ENCODE measurements at regions of chr1 and their contacts with region 1.

Region 1: DNA sequence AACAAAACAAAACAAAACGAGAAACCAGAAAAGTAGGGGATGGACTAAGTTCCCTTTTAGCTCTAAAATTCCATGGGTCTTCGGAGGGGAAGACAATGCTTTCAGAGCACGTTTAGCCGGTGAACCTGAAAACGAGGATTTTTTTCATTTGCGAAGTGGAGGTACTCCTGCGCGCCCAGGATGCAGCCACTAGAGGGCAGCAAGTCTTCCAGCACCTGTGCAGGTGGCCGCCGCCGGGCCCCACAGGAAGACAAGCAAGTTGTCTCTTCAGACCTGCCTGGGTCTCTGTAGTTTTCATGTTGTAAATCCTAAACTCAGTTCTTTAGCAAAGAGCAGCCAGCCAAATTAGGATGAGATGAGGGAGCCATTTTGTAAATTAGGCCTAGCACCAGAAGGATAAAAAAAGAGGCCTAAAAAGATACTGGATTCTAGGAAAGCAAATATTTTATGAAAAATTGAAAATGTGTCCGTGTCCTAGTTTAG is 17.7 kb upstream of the SNX27 start:
- DNase-seq: peak; percentile 93
- H3K4me3 Mint-ChIP-seq: no peak overlapping the region
- H3K27ac Mint-ChIP-seq: peak overlapping the region; percentile 27
- H3K4me1 Mint-ChIP-seq: peaks cover 40% of the 10 kb centered on the region
- H3K27me3 Mint-ChIP-seq: no peaks in the 10 kb centered on the region
- CTCF ChIP-seq: peak; percentile 94

Region 2: DNA sequence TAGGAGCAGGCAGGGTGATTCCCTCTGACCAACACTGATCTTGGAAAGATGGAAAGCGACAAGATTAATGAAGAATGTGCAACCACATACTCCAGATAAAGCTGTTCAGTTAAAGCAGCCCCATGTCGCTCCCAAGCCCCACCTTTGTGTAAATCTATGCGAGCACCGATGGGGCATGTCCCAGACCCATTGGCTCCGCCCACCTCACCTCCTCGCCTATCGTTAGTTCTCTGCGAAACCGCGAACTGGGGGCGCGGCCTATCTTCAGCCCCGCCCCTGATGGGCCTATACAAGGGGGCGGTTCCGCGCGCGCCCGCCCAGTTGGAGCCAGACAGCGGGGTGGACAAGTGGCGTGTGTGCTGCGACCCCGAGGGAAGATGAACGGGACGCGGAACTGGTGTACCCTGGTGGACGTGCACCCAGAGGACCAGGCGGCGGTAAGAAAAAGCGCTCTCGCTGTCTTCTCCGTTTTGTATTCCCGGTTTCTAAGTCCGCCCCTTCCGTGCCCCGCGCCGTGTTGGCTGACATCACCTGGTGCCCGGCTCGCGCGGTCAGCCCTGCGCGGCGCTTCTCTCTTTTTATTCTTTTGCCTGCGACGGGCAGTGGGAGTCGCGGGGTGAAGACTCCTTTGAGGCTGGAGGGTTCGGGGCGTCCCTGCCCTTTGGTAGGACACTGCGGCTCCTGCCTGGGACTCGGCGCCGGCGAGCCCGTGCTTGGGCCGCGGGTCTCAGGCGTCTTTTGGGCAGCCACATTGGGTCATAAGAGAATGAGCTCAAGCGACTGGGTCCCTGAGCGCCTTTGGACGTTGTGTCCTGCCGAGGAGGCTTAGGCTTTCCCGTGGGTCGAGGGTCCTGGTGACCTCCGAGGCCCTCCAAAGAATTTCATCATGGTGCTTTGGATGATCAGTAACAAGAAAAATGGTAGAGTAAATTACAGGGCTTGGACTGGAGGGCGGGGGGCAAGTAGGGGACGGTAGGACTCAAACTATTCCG is 53.9 kb before region 1 on chr1 and contains the start of gene TUFT1:
- CTCF ChIA-PET with region 1: no interaction called
- intact Hi-C with region 1: loop called (anchors 10 kb)
- DNase-seq: peak; percentile 98
- H3K4me3 Mint-ChIP-seq: peak within 1 kb of the TSS; percentile 86
- H3K27ac Mint-ChIP-seq: peak within 1 kb of the TSS; percentile 92
- H3K4me1 Mint-ChIP-seq: peaks cover 28% of the 10 kb centered on the region
- H3K27me3 Mint-ChIP-seq: no peaks in the 10 kb centered on the region
- CTCF ChIP-seq: no peak
- total RNA-seq, gene TUFT1: 31.4 and 34.3 TPM in 2 replicates

Region 3: GRCh38 chr1:151611832-151612500 is 17.8 kb after region 1 on chr1 and contains the start of gene SNX27:
- CTCF ChIA-PET with region 1: interaction called, 5 read pairs
- intact Hi-C with region 1: loop called (anchors 2 kb)
- DNase-seq: peak; percentile 89
- H3K4me3 Mint-ChIP-seq: peak within 1 kb of the TSS; percentile 83
- H3K27ac Mint-ChIP-seq: peak within 1 kb of the TSS; percentile 76
- H3K4me1 Mint-ChIP-seq: peaks cover 50% of the 10 kb centered on the region
- H3K27me3 Mint-ChIP-seq: no peaks in the 10 kb centered on the region
- CTCF ChIP-seq: no peak
- total RNA-seq, gene SNX27: 52.4 and 57.1 TPM in 2 replicates

Region 4: DNA sequence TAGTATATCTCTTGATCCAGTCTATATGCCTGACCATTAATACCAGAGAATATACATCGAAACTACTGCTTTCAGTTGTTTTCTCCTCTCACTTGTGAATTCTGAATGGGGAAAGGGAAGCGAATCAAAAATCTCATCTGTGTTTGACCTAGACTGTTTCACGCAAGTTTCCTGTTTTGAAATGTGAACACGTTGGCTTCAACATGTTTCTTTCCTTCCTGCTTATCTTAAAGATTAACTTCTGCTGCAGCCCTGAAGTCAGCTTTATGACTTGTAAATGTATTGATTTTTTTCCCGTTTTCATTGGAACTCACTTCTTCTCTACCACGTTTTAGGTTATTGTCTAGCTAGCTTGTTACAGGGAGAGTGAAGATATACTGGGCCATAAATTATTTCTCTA is 67.6 kb after region 1 on chr1:
- CTCF ChIA-PET with region 1: no interaction called
- intact Hi-C with region 1: loop called (anchors 5 kb)
- DNase-seq: no peak
- H3K4me3 Mint-ChIP-seq: no peak overlapping the region
- H3K27ac Mint-ChIP-seq: peak overlapping the region; percentile 11
- H3K4me1 Mint-ChIP-seq: peaks cover 20% of the 10 kb centered on the region
- H3K27me3 Mint-ChIP-seq: no peaks in the 10 kb centered on the region
- CTCF ChIP-seq: no peak

Region 5: GRCh38 chr1:151680812-151681211 is 86.6 kb after region 1 on chr1:
- CTCF ChIA-PET with region 1: interaction called, 10 read pairs
- intact Hi-C with region 1: loop called (anchors 5 kb)
- DNase-seq: peak; percentile 54
- H3K4me3 Mint-ChIP-seq: peak overlapping the region; percentile 5
- H3K27ac Mint-ChIP-seq: peak overlapping the region; percentile 62
- H3K4me1 Mint-ChIP-seq: peaks cover 30% of the 10 kb centered on the region
- H3K27me3 Mint-ChIP-seq: no peaks in the 10 kb centered on the region
- CTCF ChIP-seq: no peak

Region 6: DNA sequence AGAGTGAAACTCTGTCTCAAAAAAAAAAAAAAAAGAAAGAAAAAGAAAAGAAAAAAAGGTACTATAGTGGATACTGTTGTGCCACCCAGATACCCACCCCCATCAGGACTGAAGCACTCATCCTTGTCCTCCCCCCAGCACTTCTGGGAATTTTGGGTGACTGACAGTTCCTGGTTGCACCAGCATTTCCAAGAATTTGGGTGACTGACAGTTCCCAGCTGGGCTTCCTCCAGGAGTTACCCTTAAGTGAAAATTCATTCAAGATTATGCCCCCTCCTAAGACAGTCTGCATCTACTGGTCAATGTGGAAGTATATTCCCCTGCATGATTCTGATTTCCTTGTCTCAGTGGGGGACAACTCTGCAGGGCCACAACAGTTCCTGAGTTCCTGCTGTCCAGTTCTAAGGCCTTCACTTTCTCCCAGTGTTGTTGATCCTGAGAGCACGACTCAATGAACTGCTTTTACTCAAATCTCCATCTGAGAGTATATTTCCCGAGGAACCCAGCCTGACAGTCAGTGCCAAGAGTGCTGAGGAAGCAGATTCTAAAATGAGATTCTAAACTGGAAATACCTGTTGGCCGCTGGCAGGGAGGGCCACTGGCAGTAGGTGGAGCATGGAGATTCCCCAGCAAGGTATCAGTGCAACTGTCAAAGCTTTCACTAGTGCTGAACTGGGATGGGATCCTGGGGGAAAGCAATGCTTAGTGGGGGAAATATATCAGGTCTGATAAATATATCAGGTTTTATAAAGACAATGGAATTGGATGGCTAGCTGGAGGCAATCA is 145.6 kb after region 1 on chr1:
- CTCF ChIA-PET with region 1: interaction called, 3 read pairs
- intact Hi-C with region 1: loop called (anchors 2 kb)
- DNase-seq: peak; percentile 75
- H3K4me3 Mint-ChIP-seq: no peak overlapping the region
- H3K27ac Mint-ChIP-seq: no peak overlapping the region
- H3K4me1 Mint-ChIP-seq: peaks cover 17% of the 10 kb centered on the region
- H3K27me3 Mint-ChIP-seq: no peaks in the 10 kb centered on the region
- CTCF ChIP-seq: no peak